ENCODE measurements at regions of chr4 and their contacts with region 1.

Region 1: DNA sequence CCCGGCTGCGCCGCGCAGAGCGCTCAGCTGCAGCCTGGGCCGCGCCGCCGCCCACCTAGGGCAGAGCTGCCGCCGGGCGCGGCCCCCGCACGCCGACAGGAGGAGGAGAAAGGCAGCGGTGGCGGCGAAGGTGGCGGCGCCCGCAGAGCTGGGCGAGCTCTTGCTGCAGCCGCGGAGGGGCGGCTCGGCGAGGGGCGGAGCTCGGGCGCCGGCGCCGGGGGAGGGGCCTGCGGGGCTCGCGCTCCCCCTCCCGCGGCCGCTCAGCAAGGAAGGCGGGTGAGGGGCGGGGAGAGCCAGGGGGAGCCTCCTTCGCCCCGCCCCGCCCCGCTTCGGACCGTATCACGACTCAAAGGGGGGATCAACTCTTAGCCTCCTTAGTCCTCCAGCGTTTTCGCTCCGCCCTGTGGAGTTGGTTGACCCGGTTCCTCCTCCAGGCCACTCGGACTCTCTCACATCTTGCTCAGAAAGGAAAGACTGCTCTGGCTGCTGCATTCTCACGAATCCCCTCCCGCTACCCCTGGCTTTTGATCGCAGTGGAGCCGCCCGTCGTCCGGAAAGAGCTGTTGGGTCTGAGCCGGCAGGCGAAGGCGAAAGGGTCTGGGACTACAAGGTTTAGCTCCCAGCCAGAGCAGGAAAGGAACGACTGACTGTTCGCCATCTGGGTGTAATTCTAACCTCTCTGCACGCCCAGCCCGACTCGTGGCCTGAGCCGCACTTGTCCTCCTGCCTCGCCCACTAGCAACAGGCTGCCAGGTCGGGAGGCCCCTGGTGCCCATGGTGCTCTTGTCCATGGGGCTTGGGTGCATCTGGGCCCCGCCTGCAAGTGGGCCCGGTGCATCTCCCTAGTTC is at the start of gene ATP8A1:
- DNase-seq: peak; percentile 94
- ATAC-seq: peak; percentile 88
- H3K4me3 Mint-ChIP-seq: peak within 1 kb of the TSS; percentile 94
- H3K27ac Mint-ChIP-seq: peak within 1 kb of the TSS; percentile 99
- H3K4me1 Mint-ChIP-seq: peaks cover 34% of the 10 kb centered on the region
- H3K27me3 Mint-ChIP-seq: no peaks in the 10 kb centered on the region
- total RNA-seq, gene ATP8A1: 31.3 to 43.8 TPM

Region 2: DNA sequence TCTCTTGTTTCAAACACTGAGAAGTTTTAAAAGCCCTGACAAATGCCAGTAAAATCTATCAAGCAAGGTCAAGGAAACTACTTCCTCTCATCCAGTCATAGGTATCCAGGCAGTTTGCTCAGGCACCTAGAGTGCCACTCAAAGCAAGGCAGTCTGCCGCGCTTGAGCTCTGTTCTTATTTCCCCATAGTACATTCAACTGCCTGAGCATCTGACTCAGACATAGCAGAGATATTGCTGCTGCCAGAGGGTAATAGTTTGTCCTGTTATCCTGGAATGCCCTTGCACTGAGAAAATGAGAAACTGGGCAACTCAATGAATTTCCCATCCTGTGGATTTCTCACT is 15.9 kb after region 1 on chr4:
- CTCF ChIA-PET with region 1: interaction called, 24 read pairs
- DNase-seq: peak; percentile 58
- ATAC-seq: no peak
- H3K4me3 Mint-ChIP-seq: peak overlapping the region; percentile 31
- H3K27ac Mint-ChIP-seq: peak overlapping the region; percentile 94
- H3K4me1 Mint-ChIP-seq: peaks cover 52% of the 10 kb centered on the region
- H3K27me3 Mint-ChIP-seq: no peaks in the 10 kb centered on the region

Region 3: DNA sequence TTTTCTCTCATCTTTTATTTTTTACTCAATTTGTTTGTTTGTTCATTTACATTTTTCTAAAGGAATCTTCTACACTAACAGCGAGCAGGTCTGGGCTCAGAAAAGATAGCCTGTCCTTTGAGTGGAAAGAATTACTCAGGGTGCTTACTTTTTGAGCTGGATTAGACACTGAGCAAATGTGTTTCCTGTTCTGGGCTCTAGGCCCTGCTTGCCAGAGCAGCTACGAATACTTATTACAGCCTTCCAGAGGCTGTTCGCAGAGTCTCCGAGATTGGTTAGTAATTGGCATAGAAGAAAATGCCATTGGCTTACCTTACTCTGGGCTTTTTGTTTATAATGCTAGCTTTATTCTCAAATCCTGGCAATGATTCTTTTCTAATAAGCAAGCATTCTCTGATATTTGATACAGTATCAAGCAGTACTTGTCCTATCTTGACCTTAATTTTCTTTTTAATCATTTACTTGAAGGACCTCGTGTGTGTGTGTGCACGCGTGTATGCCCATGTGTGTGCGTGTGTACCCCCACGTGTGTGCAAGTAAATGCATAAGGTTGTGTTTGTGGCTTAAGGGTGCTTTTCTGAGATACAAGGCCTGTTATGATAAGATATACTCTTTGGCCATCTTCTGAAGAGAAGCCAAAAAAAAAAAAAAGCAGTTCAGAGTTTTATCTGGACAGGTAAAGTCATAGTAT is 159.2 kb after region 1 on chr4:
- CTCF ChIA-PET with region 1: no interaction called
- DNase-seq: no peak
- ATAC-seq: no peak
- H3K4me3 Mint-ChIP-seq: no peak overlapping the region
- H3K27ac Mint-ChIP-seq: no peak overlapping the region
- H3K4me1 Mint-ChIP-seq: no peaks in the 10 kb centered on the region
- H3K27me3 Mint-ChIP-seq: peaks cover 19% of the 10 kb centered on the region